Activated CD8-positive, alpha-beta memory T cell treated with anti-CD3 and anti-CD28 coated beads, Interleukin-2, amount 10 ng/mL, durations not matched to agents 7 days and 5 days (primary cell): ENCODE measurements at regions of chr1 and their contacts with region 1.

Region 1: DNA sequence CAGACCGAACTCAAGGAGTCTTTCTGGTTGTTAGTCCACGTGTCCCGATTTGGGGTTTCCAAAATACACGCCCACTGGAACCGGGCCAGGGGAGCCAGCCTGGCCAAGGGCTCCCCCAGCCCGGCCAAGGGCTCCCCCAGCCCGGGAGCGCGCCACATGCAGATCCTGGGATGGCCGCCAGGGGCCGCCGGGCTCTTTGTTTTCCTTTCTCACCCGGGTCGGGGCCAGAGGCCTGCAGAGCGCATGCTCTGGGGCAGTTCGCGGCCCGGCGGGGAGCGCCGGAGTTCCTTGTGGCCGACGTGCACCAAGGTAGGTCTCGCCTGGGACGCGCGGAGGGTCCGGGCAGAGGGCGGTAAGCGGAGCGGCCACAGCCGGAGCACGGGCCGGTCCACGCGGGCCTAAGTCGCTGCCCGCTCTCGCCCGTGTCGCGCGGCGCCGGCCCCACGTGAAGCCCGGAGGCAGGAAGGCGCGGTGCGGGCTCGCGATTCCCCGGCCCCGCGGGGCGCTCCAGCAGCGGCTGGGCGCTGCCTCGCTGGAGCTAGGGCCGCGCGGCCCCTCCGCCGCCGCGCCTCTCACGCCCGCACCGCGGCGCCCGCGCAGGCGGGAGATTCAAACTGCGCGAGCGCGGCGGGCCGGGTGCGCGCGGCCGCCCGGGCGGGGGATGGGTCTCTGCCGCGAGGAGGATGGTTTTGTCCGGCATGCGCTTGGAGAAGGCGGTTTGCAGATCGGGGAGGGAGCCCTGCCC is 12.3 kb downstream of the RCC1 start:
- DNase-seq: peak; percentile 92
- ATAC-seq: peak; percentile 79
- H3K4me3 Mint-ChIP-seq: peak overlapping the region; percentile 81
- H3K27ac Mint-ChIP-seq: peak overlapping the region; percentile 88
- H3K4me1 Mint-ChIP-seq: peaks cover 45% of the 10 kb centered on the region
- H3K27me3 Mint-ChIP-seq: no peaks in the 10 kb centered on the region

Region 2: GRCh38 chr1:28528356-28528755 is 10.2 kb after region 1 on chr1:
- CTCF ChIA-PET with region 1: no interaction called
- DNase-seq: no peak
- ATAC-seq: no peak
- H3K4me3 Mint-ChIP-seq: no peak overlapping the region
- H3K27ac Mint-ChIP-seq: no peak overlapping the region
- H3K4me1 Mint-ChIP-seq: peaks cover 8% of the 10 kb centered on the region
- H3K27me3 Mint-ChIP-seq: no peaks in the 10 kb centered on the region

Region 3: DNA sequence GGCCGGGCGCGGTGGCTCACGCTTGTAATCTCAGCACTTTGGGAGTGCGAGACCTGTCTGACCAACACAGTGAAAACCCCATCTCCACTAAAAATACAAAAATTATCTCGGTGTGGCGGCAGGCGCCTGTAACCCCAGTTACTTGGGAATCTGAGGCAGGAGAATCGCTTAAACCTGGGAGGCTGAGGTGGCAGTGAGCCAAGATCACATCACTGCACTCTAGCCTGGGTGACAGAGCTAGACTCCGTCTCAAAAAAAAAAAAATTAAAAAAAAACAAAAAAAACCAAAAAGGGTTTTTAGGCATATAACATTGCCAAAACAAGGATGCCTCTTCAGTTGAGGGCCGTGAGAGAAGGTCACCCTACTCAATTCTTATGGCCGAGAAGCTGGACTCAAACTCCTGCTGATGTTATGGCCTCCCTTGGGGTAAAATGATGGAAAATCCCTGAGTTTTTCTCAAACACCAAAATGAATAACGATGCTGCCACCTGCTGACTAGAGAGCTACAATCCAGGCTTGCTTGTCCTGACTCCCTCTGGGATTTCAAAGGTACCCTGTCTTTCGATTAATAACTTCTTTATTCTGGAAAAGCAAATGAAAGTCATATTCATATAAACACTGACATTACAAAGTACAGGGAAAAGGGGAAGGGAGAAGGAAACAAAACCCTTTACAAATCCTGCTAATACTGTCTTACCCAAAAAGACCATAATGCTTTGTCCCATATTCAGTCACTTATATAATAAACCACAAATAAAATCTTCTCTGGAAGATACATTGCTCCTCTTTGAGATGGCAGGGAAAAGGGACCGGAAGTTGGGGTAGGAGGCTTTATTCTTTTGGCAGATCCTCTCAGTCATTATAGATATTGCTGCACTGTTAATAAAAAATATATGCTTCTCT is 84.6 kb after region 1 on chr1:
- CTCF ChIA-PET with region 1: interaction called, 12 read pairs
- DNase-seq: peak; percentile 47
- ATAC-seq: no peak
- H3K4me3 Mint-ChIP-seq: no peak overlapping the region
- H3K27ac Mint-ChIP-seq: no peak overlapping the region
- H3K4me1 Mint-ChIP-seq: peaks cover 14% of the 10 kb centered on the region
- H3K27me3 Mint-ChIP-seq: no peaks in the 10 kb centered on the region

Region 4: DNA sequence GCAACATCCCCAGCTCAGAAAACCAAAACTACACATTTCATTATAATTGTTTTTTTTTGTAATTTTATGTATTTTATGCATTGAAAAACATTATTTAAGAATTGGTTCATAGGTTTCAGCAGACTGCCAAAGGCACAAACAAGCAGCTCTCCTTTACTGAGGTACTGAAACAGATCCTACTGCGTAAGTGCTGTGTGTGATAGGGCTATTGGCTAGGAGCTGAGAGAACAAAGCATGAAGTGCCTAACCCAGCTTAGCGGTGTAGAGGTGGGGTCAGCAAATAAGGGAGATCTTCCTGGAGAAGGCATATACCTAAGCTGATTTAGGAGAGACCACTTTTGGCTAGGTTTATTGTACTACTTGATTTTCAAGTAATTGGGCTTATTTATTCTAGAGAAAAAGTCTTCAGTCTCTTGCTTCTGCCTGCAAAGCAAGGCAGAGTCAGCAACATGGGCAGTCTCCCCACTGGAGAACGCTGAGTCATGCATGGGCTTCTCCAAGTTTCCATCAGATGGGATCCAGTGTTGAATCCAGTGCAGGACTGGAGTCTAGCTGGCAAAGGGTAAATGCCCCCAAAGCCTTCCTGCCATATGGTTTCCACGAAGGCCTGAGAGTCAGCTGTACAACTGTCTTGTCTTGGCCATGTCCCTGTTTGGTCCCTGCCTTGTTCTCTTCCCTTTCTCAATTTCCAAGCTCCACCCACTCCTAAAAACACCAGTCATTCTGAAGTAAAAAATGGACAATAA is 200.6 kb after region 1 on chr1:
- CTCF ChIA-PET with region 1: no interaction called
- DNase-seq: no peak
- ATAC-seq: no peak
- H3K4me3 Mint-ChIP-seq: no peak overlapping the region
- H3K27ac Mint-ChIP-seq: no peak overlapping the region
- H3K4me1 Mint-ChIP-seq: no peaks in the 10 kb centered on the region
- H3K27me3 Mint-ChIP-seq: no peaks in the 10 kb centered on the region